ENCODE measurements at regions of chr16 and their contacts with region 1.

Region 1: GRCh38 chr16:10428433-10429168 is 42.7 kb downstream of the ATF7IP2 start:
- DNase-seq: no peak
- ATAC-seq: no peak
- H3K4me3 ChIP-seq: no peak overlapping the region
- H3K27ac ChIP-seq: no peak overlapping the region
- H3K4me1 ChIP-seq: no peaks in the 10 kb centered on the region
- H3K27me3 ChIP-seq: peaks cover 0 to 1% (median 0%) of the 10 kb centered on the region in 3 donors
- CTCF ChIP-seq: no peak

Region 2: DNA sequence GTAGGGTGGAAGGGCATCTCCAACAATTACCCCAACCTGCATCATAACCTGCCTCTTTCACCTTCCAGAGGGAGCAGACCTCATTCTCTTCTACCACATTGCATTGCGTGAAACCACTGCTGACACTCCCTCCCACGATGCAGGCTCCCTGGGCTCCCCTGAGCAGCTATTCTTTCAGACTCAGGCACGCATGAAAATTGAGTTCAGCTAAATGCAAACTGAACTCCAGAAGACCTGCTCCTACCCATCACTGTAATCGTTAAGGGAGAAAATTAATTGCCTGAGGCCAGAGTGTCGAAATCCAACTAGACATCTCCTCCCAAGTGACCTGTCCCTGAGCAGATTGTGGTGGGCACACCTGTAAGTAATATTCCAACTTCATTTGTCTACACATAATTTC is 432.4 kb before region 1 on chr16:
- intact Hi-C with region 1: loop called in 1 of 2 experiments (anchors 10 kb)
- DNase-seq: no peak
- ATAC-seq: no peak
- H3K4me3 ChIP-seq: no peak overlapping the region
- H3K27ac ChIP-seq: no peak overlapping the region
- H3K4me1 ChIP-seq: no peaks in the 10 kb centered on the region
- H3K27me3 ChIP-seq: no peaks in the 10 kb centered on the region
- CTCF ChIP-seq: no peak